ENCODE measurements at regions of chr5 and their contacts with region 1.

Region 1: GRCh38 chr5:157189223-157189622 is 8.6 kb downstream of the ITK start:
- DNase-seq: no peak
- H3K4me3 Mint-ChIP-seq: peak overlapping the region; percentile 70
- H3K27ac Mint-ChIP-seq: peak overlapping the region; percentile 85
- H3K4me1 Mint-ChIP-seq: peaks cover 83% of the 10 kb centered on the region
- H3K27me3 Mint-ChIP-seq: no peaks in the 10 kb centered on the region

Region 2: DNA sequence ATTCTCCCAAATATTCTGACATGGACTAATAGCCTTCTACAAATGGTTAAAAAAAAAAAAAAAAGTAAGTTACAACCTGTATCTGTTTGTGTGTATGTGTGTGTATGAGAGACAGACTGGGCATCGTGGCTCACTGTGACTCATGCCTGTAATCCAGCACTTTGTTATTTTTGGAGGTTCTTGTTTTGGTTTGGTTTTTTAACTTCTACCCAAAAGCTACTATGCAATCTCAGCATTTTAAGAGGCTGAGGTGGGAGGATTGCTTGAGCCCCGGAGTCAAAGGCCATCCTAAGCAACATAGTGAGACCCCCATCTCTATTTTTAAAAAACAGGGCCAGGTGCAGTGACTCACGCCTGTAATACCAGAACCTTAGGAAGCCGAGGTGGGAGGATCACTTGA is 112.7 kb before region 1 on chr5:
- CTCF ChIA-PET with region 1: no interaction called
- POLR2A ChIA-PET with region 1: no interaction called
- DNase-seq: peak; percentile 38
- H3K4me3 Mint-ChIP-seq: no peak overlapping the region
- H3K27ac Mint-ChIP-seq: peak overlapping the region; percentile 50
- H3K4me1 Mint-ChIP-seq: peaks cover 52% of the 10 kb centered on the region
- H3K27me3 Mint-ChIP-seq: no peaks in the 10 kb centered on the region

Region 3: DNA sequence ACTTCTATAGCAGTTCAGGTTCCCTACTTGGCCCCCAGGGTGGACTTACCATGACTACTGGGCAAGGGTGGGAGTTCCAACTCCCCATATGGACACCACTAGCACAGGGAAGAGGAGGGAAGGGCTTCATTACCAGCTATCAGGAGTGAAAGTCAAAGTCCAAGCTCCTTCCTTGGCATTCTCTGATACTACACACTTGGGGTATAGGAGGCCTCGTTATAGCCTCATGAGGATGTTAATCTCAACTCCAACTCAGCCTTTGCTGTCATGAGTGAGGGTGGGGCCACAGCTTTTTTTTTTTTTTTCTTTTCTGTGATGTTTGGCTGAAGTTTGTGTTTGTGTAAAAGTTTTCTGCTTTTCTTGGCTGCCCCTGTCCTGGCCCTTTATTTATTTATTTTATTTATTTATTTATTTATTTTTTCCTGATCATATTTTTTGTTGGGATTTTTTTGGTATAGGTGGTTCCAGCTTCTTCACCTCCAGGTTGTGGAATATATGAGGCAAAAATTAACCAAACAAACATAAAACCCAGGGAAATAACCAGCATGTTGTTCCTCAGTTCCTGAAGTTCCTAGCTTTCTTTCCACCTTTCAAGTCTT is 31.8 kb before region 1 on chr5:
- CTCF ChIA-PET with region 1: interaction called, 11 read pairs
- POLR2A ChIA-PET with region 1: interaction called, 260 read pairs
- DNase-seq: no peak
- H3K4me3 Mint-ChIP-seq: peak overlapping the region; percentile 0
- H3K27ac Mint-ChIP-seq: peak overlapping the region; percentile 50
- H3K4me1 Mint-ChIP-seq: peaks cover 75% of the 10 kb centered on the region
- H3K27me3 Mint-ChIP-seq: no peaks in the 10 kb centered on the region

Region 4: GRCh38 chr5:157172403-157172802 is 16.8 kb before region 1 on chr5:
- CTCF ChIA-PET with region 1: interaction called, 4 read pairs
- POLR2A ChIA-PET with region 1: interaction called, 284 read pairs
- DNase-seq: peak; percentile 85
- H3K4me3 Mint-ChIP-seq: peak overlapping the region; percentile 46
- H3K27ac Mint-ChIP-seq: peak overlapping the region; percentile 85
- H3K4me1 Mint-ChIP-seq: peaks cover 76% of the 10 kb centered on the region
- H3K27me3 Mint-ChIP-seq: no peaks in the 10 kb centered on the region

Region 5: GRCh38 chr5:157204765-157205164 is 15.5 kb after region 1 on chr5:
- CTCF ChIA-PET with region 1: interaction called, 3 read pairs
- POLR2A ChIA-PET with region 1: interaction called, 284 read pairs
- DNase-seq: no peak
- H3K4me3 Mint-ChIP-seq: no peak overlapping the region
- H3K27ac Mint-ChIP-seq: peak overlapping the region; percentile 68
- H3K4me1 Mint-ChIP-seq: peaks cover 87% of the 10 kb centered on the region
- H3K27me3 Mint-ChIP-seq: no peaks in the 10 kb centered on the region

Region 6: GRCh38 chr5:157225469-157226422 is 36.5 kb after region 1 on chr5:
- CTCF ChIA-PET with region 1: interaction called, 9 read pairs
- POLR2A ChIA-PET with region 1: interaction called, 11 read pairs
- DNase-seq: no peak
- H3K4me3 Mint-ChIP-seq: peak overlapping the region; percentile 26
- H3K27ac Mint-ChIP-seq: peak overlapping the region; percentile 69
- H3K4me1 Mint-ChIP-seq: peaks cover 72% of the 10 kb centered on the region
- H3K27me3 Mint-ChIP-seq: no peaks in the 10 kb centered on the region

Region 7: DNA sequence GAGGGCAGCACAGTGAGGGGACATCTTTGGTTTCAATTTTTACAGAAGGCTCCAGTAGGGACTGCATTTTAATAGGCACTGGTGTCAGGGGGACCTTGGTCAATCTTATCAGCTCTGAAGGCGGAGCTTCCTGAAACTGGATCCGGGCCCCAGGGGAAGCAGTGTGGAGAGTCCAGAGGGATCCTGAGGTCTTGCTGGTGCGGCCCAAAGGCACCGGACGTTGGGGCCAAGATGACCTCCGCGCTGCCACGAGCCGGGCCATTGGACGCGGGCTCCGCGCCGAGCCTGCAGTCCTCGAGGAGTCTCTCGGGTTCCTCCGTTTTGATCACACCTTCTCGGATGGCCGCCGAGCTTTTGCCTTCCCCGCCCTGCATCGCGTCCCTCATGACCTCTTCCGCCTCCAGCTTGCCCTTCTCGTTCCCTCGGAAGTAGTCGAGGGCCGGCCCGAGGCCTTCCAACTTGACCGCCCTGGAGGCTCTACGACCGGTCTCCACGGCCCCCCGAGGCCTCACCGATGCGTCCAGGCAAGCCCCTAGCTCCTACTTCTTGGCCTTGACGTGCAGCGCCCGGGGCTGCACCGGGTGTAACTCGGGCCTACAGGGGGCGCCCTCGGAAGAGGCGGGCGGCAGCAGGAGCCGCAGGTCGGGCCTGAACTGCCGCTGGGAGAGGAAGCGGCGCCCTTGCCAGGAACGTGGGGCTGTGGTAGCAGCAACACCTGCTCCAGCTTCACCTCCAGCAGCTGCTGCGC is 500.9 kb after region 1 on chr5:
- CTCF ChIA-PET with region 1: no interaction called
- POLR2A ChIA-PET with region 1: no interaction called
- DNase-seq: peak; percentile 38
- H3K4me3 Mint-ChIP-seq: no peak overlapping the region
- H3K27ac Mint-ChIP-seq: no peak overlapping the region
- H3K4me1 Mint-ChIP-seq: no peaks in the 10 kb centered on the region
- H3K27me3 Mint-ChIP-seq: peaks cover 1% of the 10 kb centered on the region